Common myeloid progenitor, CD34-positive (primary cell): ENCODE measurements at regions of chr2 and their contacts with region 1.

Region 1: GRCh38 chr2:234544659-234545611 is 48.1 kb upstream of the ARL4C start:
- DNase-seq: peak; percentile 48 to 68 (median 60)
- H3K4me3 ChIP-seq: no peak overlapping the region
- H3K27ac ChIP-seq: no peak overlapping the region
- H3K4me1 ChIP-seq: no peaks in the 10 kb centered on the region
- H3K27me3 ChIP-seq: peaks cover 0 to 15% (median 4%) of the 10 kb centered on the region in 5 experiments

Region 2: GRCh38 chr2:233974530-233975071 is 570.3 kb before region 1 on chr2:
- CTCF ChIA-PET with region 1: interaction called, 12 read pairs
- POLR2A ChIA-PET with region 1: no interaction called
- DNase-seq: peak in 2 of 3 donors; percentile 16 to 36
- H3K4me3 ChIP-seq: no peak overlapping the region
- H3K27ac ChIP-seq: no peak overlapping the region
- H3K4me1 ChIP-seq: no peaks in the 10 kb centered on the region
- H3K27me3 ChIP-seq: peaks cover 0 to 30% (median 13%) of the 10 kb centered on the region in 5 experiments

Region 3: DNA sequence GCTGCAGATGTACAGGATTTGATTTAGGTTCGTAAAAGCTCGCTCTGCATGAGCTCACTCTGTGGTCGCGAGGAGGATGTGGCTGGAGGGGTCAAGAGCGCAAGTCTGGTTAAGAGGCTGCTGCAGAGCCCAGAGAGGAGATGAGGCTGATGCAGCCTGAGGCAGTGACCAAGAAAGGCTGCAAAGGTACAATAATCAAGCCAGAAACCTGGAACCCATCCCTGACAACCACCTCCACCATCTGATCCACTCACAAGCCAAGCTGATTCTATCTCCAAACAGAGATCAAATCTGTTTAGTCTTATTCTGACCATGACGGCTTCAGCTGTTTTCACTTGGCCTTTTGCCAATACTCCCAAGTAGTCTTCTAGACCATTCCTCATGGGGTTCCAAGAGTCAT is 10.8 kb after region 1 on chr2:
- CTCF ChIA-PET with region 1: interaction called, 11 read pairs
- POLR2A ChIA-PET with region 1: no interaction called
- DNase-seq: peak in 2 of 3 donors; percentile 43 to 48
- H3K4me3 ChIP-seq: no peak overlapping the region
- H3K27ac ChIP-seq: no peak overlapping the region
- H3K4me1 ChIP-seq: peaks cover 0 to 5% (median under 1%) of the 10 kb centered on the region in 4 experiments
- H3K27me3 ChIP-seq: no peaks in the 10 kb centered on the region

Region 4: DNA sequence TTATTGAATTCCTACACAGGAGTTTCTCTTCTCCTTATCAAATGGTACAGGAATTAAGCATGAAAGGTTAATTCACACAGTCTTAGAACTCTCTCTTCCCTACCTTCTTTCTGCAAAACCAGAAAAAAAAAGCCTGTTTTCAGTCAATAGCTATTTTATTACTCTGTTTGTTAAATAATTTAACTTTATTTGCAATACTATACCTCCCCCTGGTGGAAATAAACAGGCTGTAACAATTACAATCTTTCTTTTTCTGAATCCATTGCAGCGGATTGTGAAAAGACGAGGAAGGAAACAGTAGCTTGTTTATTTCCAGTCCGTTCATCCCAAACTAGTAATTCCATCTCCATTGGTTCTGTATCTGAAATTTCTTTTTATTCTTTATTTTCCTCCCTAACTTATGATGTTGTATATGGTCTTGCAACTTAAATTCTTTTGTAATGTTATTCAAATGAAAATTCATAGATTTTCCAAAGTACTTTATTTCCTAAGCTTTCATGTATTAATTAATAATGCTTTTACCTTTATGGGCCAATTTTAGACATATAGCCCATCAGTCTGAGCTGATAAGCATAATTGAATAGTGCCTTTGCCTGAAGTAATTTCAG is 572.1 kb after region 1 on chr2:
- CTCF ChIA-PET with region 1: interaction called, 11 read pairs
- POLR2A ChIA-PET with region 1: no interaction called
- DNase-seq: peak; percentile 37 to 63 (median 58)
- H3K4me3 ChIP-seq: no peak overlapping the region
- H3K27ac ChIP-seq: no peak overlapping the region
- H3K4me1 ChIP-seq: no peaks in the 10 kb centered on the region
- H3K27me3 ChIP-seq: peaks cover 0 to 14% (median 9%) of the 10 kb centered on the region in 5 experiments